Common myeloid progenitor, CD34-positive (primary cell): ENCODE measurements at regions of chr2 and their contacts with region 1.

Region 1: DNA sequence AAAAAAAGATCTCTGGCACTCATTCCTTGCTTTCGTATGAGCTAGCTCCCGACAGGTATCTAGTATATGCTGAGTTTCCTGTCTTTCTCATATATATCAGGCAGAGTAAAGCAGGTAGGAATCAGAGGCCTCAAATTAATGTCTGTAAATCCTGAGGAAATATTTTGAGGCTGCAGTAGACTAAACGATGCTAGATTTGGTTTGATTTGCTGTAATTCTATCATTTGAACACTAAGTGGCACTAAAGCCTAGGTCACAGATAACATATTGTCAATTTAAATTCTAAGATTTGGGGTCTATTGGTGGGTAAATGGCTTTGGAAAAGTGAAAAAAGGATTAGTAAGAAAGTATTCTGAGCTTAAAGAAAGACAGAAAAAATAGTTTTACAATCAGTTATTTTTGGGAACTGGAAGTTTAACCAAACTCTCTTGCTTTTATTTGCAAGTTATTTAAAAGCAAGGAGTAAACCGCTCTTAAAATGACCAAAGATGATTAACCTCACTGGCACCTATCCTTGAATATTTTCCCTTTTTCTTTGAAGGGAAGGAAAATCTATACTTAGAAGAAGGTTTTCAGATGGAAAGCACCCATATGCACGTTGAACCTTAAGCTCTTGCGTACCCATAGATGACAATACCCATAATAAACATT is 37.6 kb upstream of the SLC4A10 start:
- DNase-seq: peak; percentile 18 to 52 (median 39)
- H3K4me3 ChIP-seq: no peak overlapping the region
- H3K27ac ChIP-seq: no peak overlapping the region
- H3K4me1 ChIP-seq: no peaks in the 10 kb centered on the region
- H3K27me3 ChIP-seq: no peaks in the 10 kb centered on the region

Region 2: DNA sequence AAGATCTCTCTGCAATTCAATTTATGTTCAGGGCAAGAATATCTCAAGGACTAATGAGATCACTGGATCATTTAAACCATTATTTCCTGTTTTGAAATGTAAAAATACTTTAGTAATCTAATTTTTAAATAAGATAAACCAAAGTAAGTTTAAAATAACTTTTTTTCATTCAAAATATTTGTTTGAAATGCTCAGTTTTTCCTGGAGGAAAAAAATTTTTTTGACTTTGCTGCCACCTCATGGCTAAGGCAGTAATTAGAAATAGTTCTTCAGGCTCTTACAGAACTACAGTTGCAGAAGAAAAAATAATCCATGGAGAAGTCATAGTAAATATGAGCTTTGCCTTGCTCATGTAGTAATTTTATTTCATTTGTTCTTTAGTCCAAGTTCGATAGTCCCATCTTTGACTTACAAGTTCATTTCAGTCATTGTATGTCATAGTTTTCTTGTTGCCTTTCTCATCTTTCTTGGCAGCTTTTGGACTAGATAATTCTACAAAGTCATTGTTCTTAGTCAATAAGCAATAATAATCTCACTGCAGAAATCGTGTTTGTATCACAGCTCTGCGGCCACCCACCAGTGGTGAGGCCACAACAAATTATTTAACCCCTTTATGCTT is 360.0 kb after region 1 on chr2:
- CTCF ChIA-PET with region 1: interaction called, 14 read pairs
- POLR2A ChIA-PET with region 1: no interaction called
- DNase-seq: peak; percentile 22 to 41 (median 22)
- H3K4me3 ChIP-seq: no peak overlapping the region
- H3K27ac ChIP-seq: no peak overlapping the region
- H3K4me1 ChIP-seq: no peaks in the 10 kb centered on the region
- H3K27me3 ChIP-seq: no peaks in the 10 kb centered on the region

Region 3: GRCh38 chr2:162085090-162085891 is 498.6 kb after region 1 on chr2:
- CTCF ChIA-PET with region 1: no interaction called
- POLR2A ChIA-PET with region 1: no interaction called
- DNase-seq: no peak
- H3K4me3 ChIP-seq: no peak overlapping the region
- H3K27ac ChIP-seq: no peak overlapping the region
- H3K4me1 ChIP-seq: no peaks in the 10 kb centered on the region
- H3K27me3 ChIP-seq: no peaks in the 10 kb centered on the region

Region 4: GRCh38 chr2:162123806-162124758 is 537.4 kb after region 1 on chr2:
- CTCF ChIA-PET with region 1: interaction called, 33 read pairs
- POLR2A ChIA-PET with region 1: no interaction called
- DNase-seq: peak; percentile 65 to 85 (median 74)
- H3K4me3 ChIP-seq: no peak overlapping the region
- H3K27ac ChIP-seq: no peak overlapping the region
- H3K4me1 ChIP-seq: peaks cover 15 to 43% (median 27%) of the 10 kb centered on the region in 4 experiments
- H3K27me3 ChIP-seq: no peaks in the 10 kb centered on the region